ENCODE measurements at regions of chr11 and their contacts with region 1.

Region 1: GRCh38 chr11:447923-448731 is 2.0 kb upstream of the PTDSS2 start:
- DNase-seq: peak; percentile 66
- H3K4me3 ChIP-seq: peak overlapping the region; percentile 78
- H3K27ac ChIP-seq: peak overlapping the region; percentile 87
- H3K27me3 ChIP-seq: peaks cover 4% of the 10 kb centered on the region
- CTCF ChIP-seq: peak; percentile 91

Region 2: GRCh38 chr11:250740-251299 is 197.3 kb before region 1 on chr11:
- CTCF ChIA-PET with region 1: interaction called, 24 read pairs
- POLR2A ChIA-PET with region 1: no interaction called
- DNase-seq: no peak
- H3K4me3 ChIP-seq: no peak overlapping the region
- H3K27ac ChIP-seq: no peak overlapping the region
- H3K27me3 ChIP-seq: no peaks in the 10 kb centered on the region
- CTCF ChIP-seq: peak; percentile 62

Region 3: GRCh38 chr11:335779-336658 is 112.1 kb before region 1 on chr11:
- CTCF ChIA-PET with region 1: no interaction called
- POLR2A ChIA-PET with region 1: no interaction called
- DNase-seq: no peak
- H3K4me3 ChIP-seq: no peak overlapping the region
- H3K27ac ChIP-seq: no peak overlapping the region
- H3K27me3 ChIP-seq: no peaks in the 10 kb centered on the region
- CTCF ChIP-seq: no peak

Region 4: DNA sequence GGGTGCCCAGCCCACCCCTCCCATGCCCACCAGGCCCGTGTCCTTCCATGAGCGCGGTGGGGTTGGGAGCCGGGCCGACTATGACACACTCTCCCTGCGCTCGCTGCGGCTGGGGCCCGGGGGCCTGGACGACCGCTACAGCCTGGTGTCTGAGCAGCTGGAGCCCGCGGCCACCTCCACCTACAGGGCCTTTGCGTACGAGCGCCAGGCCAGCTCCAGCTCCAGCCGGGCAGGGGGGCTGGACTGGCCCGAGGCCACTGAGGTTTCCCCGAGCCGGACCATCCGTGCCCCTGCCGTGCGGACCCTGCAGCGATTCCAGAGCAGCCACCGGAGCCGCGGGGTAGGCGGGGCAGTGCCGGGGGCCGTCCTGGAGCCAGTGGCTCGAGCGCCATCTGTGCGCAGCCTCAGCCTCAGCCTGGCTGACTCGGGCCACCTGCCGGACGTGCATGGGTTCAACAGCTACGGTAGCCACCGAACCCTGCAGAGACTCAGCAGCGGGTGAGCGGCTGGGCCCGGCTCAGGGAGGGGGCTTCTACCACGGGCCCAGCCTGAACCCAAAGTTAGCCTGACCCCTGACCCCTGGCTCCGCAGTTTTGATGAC is 51.1 kb before region 1 on chr11:
- CTCF ChIA-PET with region 1: no interaction called
- POLR2A ChIA-PET with region 1: interaction called, 10 read pairs
- DNase-seq: no peak
- H3K4me3 ChIP-seq: peak overlapping the region; percentile 4; the same call in 1 of the 2 replicates
- H3K27ac ChIP-seq: no peak overlapping the region
- H3K27me3 ChIP-seq: no peaks in the 10 kb centered on the region
- CTCF ChIP-seq: peak; percentile 43

Region 5: DNA sequence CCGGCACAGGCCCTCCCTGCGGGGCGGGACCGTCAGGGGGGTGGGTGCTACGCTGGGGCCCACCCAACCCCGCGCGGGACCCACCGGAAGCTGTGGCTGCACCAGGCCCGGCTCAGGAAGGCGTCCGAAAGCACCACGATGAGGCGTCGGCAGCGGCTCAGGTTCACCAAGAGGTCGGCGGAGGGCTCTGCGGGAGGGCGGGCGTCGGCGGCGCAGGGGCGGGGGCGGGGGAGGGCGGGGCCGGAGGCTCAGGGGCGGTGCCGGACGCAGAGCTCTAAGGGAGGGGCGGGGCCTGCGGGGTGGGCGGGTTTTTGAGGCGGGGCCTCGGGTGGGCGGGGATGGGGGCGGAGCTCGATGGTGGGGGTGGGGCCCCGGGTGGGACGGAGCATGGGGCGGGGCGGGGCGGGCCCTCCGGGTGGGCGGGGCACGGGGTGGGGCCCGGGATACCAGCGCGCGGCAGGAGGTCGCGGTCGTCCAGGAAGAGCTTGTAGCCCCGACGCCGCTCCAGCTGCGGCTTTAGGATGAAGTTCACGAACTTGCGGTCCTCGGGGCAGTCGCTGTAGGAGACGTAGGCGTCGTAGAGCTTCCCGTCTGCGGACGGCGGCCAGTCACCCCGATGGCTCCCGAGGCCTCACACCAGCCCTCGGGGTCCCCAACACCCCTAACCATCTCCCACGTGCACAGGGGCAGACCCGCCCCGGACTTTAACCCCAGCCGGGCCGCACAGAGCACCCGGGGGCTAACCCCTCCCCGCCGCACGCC is 41.0 kb before region 1 on chr11:
- CTCF ChIA-PET with region 1: interaction called, 18 read pairs
- POLR2A ChIA-PET with region 1: interaction called, 8 read pairs
- DNase-seq: peak; percentile 41
- H3K4me3 ChIP-seq: peak overlapping the region; percentile 68
- H3K27ac ChIP-seq: no peak overlapping the region
- H3K27me3 ChIP-seq: no peaks in the 10 kb centered on the region
- CTCF ChIP-seq: no peak

Region 6: GRCh38 chr11:469684-470560 is 21.8 kb after region 1 on chr11:
- CTCF ChIA-PET with region 1: interaction called, 11 read pairs
- POLR2A ChIA-PET with region 1: interaction called, 3 read pairs
- DNase-seq: peak; percentile 50
- H3K4me3 ChIP-seq: peak overlapping the region; percentile 46
- H3K27ac ChIP-seq: peak overlapping the region; percentile 91
- H3K27me3 ChIP-seq: no peaks in the 10 kb centered on the region
- CTCF ChIP-seq: peak; percentile 43

Region 7: DNA sequence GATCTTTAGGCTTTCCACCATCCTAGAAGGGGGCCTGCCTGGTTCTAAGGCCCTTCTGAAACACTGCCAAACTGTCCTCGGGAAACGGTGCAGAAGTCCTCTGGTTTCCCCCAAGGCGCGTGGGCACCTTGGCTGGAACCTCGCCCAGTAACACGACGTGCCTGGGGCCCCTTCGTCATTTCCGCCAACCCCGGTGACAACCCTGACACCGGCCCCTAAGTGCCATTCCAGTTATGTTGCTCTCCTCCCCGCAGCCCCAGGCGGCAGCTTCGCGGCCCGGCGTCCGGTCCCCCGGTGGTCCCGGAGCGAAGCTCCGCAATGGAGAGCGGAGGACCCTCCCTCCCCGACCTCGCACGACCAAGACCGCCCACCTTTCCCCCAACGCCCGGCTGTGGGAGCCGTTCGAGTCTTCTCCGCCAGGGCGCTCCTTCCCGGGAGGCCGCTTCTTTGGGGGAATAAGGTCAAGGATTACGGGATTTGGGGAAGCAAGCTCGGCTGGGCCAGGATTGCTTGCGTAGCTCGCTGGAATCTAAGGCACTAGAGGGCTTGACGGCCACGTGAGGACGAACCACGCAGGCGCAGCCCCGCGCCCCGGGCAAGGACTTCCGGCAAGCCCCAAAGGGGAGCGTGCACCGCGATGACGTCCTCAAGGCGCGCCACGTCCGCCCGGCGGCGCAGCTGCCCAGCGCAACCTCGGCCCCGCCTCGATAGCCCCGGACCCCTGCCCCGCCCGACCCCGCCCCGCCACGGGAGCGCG is 58.3 kb after region 1 on chr11:
- CTCF ChIA-PET with region 1: interaction called, 4 read pairs
- POLR2A ChIA-PET with region 1: interaction called, 10 read pairs
- DNase-seq: peak; percentile 97
- H3K4me3 ChIP-seq: peak overlapping the region; percentile 95
- H3K27ac ChIP-seq: peak overlapping the region; percentile 99
- H3K27me3 ChIP-seq: no peaks in the 10 kb centered on the region
- CTCF ChIP-seq: no peak

Region 8: DNA sequence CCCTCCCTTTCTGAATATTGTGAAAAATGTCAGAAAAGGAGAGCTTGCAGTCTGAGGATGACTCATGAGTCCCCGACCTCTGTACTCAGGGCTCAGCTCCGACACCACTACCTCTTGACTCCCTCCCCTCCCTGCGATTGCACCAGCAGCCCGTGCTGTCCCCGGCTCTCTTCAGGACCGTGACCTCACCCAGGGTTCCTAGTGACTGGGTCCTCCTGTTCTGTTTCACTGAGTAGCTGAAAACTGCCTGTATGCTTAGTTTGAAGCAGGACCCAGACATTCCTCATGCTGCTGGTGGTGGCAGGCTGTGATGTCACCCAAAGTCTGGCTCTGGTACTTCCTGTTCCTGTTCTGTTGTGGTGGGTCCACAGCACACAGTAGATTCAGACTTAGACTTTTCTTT is 139.9 kb after region 1 on chr11:
- CTCF ChIA-PET with region 1: no interaction called
- POLR2A ChIA-PET with region 1: no interaction called
- DNase-seq: no peak
- H3K4me3 ChIP-seq: no peak overlapping the region
- H3K27ac ChIP-seq: peak overlapping the region; percentile 47
- H3K27me3 ChIP-seq: no peaks in the 10 kb centered on the region
- CTCF ChIP-seq: no peak

Region 9: DNA sequence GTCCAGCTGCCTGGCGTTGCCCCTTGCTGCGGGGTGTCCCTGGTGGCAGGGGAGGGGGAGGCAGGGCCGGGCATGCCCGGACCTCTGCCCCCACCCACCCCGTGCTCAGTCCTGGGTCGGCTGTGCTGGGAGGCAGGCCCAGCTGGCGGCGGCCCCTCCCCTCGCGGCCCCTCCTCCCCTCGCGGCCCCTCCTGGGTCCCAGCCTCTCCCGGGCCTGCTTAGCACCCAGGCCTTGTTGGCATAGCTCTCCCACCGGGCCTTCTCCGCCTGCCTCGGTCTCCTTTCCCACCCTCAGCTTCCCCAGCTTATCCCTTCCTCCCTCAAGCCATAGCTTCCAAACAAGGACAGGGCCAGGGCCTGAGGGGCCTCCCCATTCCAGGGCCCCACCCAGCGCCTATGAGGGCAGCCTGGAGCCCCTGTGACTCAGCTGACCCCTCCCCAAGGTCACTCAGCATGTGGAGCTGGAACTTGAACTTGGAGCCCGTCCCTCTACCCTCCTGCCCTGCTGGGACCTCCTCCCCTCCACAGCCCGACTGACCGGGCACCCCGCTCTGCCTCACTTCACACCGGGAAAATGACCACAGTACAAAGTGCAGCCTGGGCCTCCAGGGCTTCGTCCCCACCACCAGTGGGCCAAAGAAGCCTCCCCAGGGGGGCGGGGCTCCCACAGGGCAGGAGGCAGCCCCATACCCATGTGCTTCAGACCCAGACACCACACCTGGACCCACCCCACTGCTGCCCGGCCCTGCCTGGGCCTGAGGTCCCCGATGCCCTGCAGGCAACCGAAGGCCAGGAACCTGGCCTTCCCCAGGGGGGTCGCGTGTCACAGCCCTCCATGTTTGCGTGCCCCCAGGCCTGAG is 259.1 kb after region 1 on chr11:
- CTCF ChIA-PET with region 1: no interaction called
- POLR2A ChIA-PET with region 1: no interaction called
- DNase-seq: no peak
- H3K4me3 ChIP-seq: peak overlapping the region; percentile 67
- H3K27ac ChIP-seq: peak overlapping the region; percentile 31
- H3K27me3 ChIP-seq: no peaks in the 10 kb centered on the region
- CTCF ChIP-seq: no peak

Measured in AG04450 (cell line).